CD4-positive, alpha-beta memory T cell (primary cell): ENCODE measurements at regions of chr15 and their contacts with region 1.

Region 1: DNA sequence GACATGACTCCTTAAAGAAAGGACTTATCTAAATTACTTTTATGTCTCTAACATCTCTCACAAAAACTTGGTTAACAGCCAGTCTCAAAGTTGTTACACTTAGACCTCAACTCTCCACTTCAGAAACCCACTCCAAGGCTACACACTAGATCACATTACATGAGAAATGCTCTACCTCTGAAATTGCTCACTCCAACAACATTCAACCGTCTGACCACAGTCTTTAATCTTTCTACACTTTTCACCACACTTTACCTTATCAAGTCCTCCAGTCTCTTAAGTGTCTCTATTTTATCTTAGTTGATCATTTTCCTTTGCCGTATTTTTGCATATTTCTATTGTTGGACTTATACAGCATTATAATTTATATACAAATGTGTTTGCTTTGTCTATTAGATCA is 5.8 kb downstream of the SLC12A6 start:
- DNase-seq: peak in 2 of 5 donors; percentile 16 to 33
- H3K4me3 ChIP-seq: no peak overlapping the region
- H3K4me3 Mint-ChIP-seq: peak overlapping the region; percentile 7 to 67 (median 30)
- H3K27ac ChIP-seq: no peak overlapping the region
- H3K27ac Mint-ChIP-seq: peak overlapping the region; percentile 31 to 87 (median 80)
- H3K4me1 ChIP-seq: peaks cover 95% of the 10 kb centered on the region
- H3K4me1 Mint-ChIP-seq: peaks cover 50 to 83% (median 63%) of the 10 kb centered on the region in 4 donors
- H3K27me3 ChIP-seq: no peaks in the 10 kb centered on the region
- H3K27me3 Mint-ChIP-seq: no peaks in the 10 kb centered on the region

Region 2: DNA sequence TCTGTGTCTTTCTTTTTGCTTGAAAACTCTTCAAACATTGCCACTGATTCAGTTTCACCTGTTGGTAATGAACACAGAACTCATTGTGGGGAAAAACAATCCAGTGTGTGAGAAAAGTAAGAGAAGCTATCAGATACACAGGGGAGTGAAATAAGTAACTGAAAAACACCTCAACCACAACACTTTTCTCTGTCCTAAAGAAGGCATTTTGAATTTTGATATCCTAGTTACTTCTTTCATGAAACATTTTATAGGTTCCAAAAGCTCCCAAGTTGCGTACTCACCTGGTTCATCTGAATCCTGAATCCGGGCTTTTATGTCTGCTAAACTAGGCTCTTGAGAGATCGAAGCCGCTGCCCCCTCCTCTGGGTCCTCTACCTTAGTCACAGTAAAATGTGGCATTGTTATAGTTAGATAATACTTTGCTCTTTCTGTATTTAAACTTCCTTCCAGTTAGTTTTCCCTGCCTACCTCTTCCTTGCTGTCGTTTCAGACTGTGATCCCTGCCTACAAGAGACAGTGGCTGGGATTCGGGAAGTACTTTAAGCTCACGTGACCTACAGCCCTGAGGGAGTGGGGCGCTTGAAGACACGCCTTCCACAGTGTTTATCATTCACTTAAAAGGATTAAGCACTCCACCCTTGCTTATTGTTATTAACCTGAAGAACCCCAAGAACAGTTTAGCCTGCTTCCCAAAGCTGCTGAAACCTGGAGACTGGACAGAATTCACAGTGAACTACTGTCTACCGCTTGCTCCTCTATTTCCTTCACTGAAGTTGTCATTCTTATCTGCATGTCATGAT is 13.3 kb before region 1 on chr15:
- CTCF ChIA-PET with region 1: interaction called, 32 read pairs
- POLR2A ChIA-PET with region 1: interaction called, 51 read pairs
- intact Hi-C with region 1: loop called (anchors 1 kb)
- DNase-seq: peak in 4 of 5 donors; percentile 12 to 50 (median 22)
- H3K4me3 ChIP-seq: peak overlapping the region; percentile 52 to 55
- H3K4me3 Mint-ChIP-seq: peak overlapping the region; percentile 93 to 99 (median 98)
- H3K27ac ChIP-seq: peak overlapping the region; percentile 49
- H3K27ac Mint-ChIP-seq: peak overlapping the region; percentile 65 to 96 (median 94)
- H3K4me1 ChIP-seq: peaks cover 31% of the 10 kb centered on the region
- H3K4me1 Mint-ChIP-seq: peaks cover 31 to 45% (median 38%) of the 10 kb centered on the region in 4 donors
- H3K27me3 ChIP-seq: no peaks in the 10 kb centered on the region
- H3K27me3 Mint-ChIP-seq: no peaks in the 10 kb centered on the region

Region 3: GRCh38 chr15:34354286-34354685 is 22.5 kb after region 1 on chr15:
- CTCF ChIA-PET with region 1: no interaction called
- POLR2A ChIA-PET with region 1: no interaction called
- intact Hi-C with region 1: no loop called
- DNase-seq: no peak
- H3K4me3 ChIP-seq: no peak overlapping the region
- H3K4me3 Mint-ChIP-seq: no peak overlapping the region
- H3K27ac ChIP-seq: no peak overlapping the region
- H3K27ac Mint-ChIP-seq: peak overlapping the region in 1 of 7 donors; percentile 74
- H3K4me1 ChIP-seq: no peaks in the 10 kb centered on the region
- H3K4me1 Mint-ChIP-seq: peaks cover 0 to 3% (median 0%) of the 10 kb centered on the region in 4 donors
- H3K27me3 ChIP-seq: no peaks in the 10 kb centered on the region
- H3K27me3 Mint-ChIP-seq: no peaks in the 10 kb centered on the region